Gastrocnemius medialis (tissue), 4 donors: ENCODE measurements at regions of chr1 and their contacts with region 1.

Region 1: GRCh38 chr1:19596714-19597495 is 47.2 kb upstream of the NBL1 start:
- DNase-seq: peak; percentile 94 to 96
- ATAC-seq: peak; percentile 95 to 98
- H3K4me3 ChIP-seq: peak overlapping the region; percentile 82 to 100 (median 85)
- H3K27ac ChIP-seq: peak overlapping the region; percentile 81 to 95 (median 94)
- H3K4me1 ChIP-seq: peaks cover 24 to 27% of the 10 kb centered on the region in 2 donors
- H3K27me3 ChIP-seq: no peaks in the 10 kb centered on the region
- CTCF ChIP-seq: no peak
- POLR2A ChIP-seq: peak; percentile 63 to 69

Region 2: GRCh38 chr1:19341201-19342072 is 255.5 kb before region 1 on chr1:
- in situ Hi-C with region 1: no loop called
- intact Hi-C with region 1: loop called (anchors 10 kb)
- DNase-seq: peak in 1 of 2 donors; percentile 68
- ATAC-seq: peak; percentile 35 to 68
- H3K4me3 ChIP-seq: no peak overlapping the region
- H3K27ac ChIP-seq: peak overlapping the region in 2 of 4 donors; percentile 30 to 33
- H3K4me1 ChIP-seq: no peaks in the 10 kb centered on the region
- H3K27me3 ChIP-seq: no peaks in the 10 kb centered on the region
- CTCF ChIP-seq: peak; percentile 67 to 88 (median 78)
- POLR2A ChIP-seq: no peak

Region 3: GRCh38 chr1:19390901-19391595 is 205.9 kb before region 1 on chr1:
- in situ Hi-C with region 1: no loop called
- intact Hi-C with region 1: loop called (anchors 5 kb)
- DNase-seq: peak in 1 of 2 donors; percentile 31
- ATAC-seq: peak; percentile 33 to 50
- H3K4me3 ChIP-seq: no peak overlapping the region
- H3K27ac ChIP-seq: peak overlapping the region; percentile 38 to 71 (median 52)
- H3K4me1 ChIP-seq: peaks cover 22 to 24% of the 10 kb centered on the region in 2 donors
- H3K27me3 ChIP-seq: no peaks in the 10 kb centered on the region
- CTCF ChIP-seq: peak; percentile 70 to 83 (median 75)
- POLR2A ChIP-seq: no peak

Region 4: DNA sequence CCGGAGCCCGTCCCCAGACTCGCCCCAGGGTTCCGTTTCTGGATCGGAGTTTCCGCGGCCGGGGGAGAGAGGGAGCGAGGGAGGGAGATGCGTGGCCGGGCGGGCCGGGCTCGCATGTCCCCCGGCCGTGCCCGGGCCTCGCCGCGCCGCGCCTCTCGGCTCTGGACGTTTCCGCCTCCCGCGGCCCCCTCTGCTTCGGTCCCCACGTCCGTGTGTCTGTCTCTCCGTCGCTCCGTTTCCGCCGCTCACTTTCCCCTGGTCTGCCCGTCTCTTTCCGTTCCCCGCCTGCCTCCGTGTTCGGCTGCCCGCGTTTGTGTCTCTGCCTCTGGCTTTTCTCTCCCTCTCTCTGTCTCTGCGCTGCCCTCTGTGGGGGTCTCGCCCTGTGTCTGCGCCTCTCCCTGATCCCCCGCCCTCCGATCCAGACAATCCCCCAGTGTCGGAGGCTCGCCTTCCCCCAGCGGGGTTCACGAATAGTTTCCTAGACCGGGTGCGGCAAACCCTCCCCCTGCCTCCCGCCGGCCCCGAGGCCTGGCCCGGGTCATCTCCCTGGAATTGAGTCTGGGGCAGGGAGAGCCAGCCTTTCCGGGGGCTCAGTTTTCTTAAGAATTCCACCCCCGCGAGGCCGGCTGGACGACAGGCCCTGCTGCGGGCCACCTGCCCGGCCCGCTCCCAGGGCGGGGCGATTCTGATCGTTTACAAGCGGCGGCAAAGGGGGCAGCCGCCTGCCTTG is 47.9 kb after region 1 on chr1:
- in situ Hi-C with region 1: no loop called
- intact Hi-C with region 1: loop called (anchors 5 kb)
- DNase-seq: no peak
- ATAC-seq: no peak
- H3K4me3 ChIP-seq: peak overlapping the region; percentile 63 to 80 (median 68)
- H3K27ac ChIP-seq: peak overlapping the region; percentile 77 to 85 (median 82)
- H3K4me1 ChIP-seq: peaks cover 9 to 10% of the 10 kb centered on the region in 2 donors
- H3K27me3 ChIP-seq: peaks cover 10 to 18% (median 17%) of the 10 kb centered on the region in 3 donors
- CTCF ChIP-seq: no peak
- POLR2A ChIP-seq: no peak

Region 5: GRCh38 chr1:19676438-19676922 is 79.6 kb after region 1 on chr1:
- in situ Hi-C with region 1: no loop called
- intact Hi-C with region 1: no loop called
- DNase-seq: peak; percentile 19 to 60
- ATAC-seq: peak; percentile 18 to 33
- H3K4me3 ChIP-seq: no peak overlapping the region
- H3K27ac ChIP-seq: no peak overlapping the region
- H3K4me1 ChIP-seq: no peaks in the 10 kb centered on the region
- H3K27me3 ChIP-seq: peaks cover 0 to 4% (median 0%) of the 10 kb centered on the region in 3 donors
- CTCF ChIP-seq: no peak
- POLR2A ChIP-seq: no peak

Region 6: GRCh38 chr1:19974822-19975416 is 378.0 kb after region 1 on chr1:
- in situ Hi-C with region 1: no loop called
- intact Hi-C with region 1: no loop called
- DNase-seq: peak in 1 of 2 donors; percentile 18
- ATAC-seq: peak in 1 of 2 donors; percentile 35
- H3K4me3 ChIP-seq: no peak overlapping the region
- H3K27ac ChIP-seq: no peak overlapping the region
- H3K4me1 ChIP-seq: no peaks in the 10 kb centered on the region
- H3K27me3 ChIP-seq: no peaks in the 10 kb centered on the region
- CTCF ChIP-seq: peak in 4 of 5 experiments; percentile 29 to 54 (median 48)
- POLR2A ChIP-seq: no peak